ENCODE measurements at regions of chr1 and their contacts with region 1.

Region 1: DNA sequence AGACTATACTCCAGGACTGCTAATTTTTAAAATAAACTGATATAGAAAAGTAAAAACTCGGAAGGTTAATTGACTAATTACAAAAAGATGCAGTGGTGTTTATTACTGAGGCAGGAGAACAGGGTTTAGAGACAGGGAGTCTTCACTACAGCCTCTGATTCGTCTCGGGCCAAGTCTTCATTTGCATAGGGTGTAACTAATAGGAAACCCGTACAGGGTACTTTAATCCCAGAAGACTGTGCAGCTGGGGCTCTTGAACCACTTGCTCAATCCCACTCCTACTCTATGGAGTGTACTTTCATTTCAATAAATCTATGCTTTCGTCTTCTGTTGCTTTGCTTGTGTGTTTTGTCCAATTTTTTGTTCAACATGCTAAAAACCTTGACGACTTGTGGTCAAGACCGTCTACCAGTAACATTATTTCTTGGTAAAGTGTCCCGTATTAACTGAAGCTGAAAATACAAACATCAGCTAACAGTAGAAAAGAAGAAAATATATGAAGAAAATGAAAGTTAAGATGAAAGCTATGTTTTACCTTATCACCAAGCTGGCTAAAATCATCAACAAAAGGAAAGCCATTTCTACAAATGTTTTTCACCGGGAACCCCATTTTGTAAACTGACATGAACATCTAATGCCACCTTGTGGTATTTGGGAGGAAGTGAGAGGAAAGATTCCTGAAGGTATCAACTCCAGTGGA is 8.0 kb downstream of the SDHB start:
- DNase-seq: no peak
- H3K4me3 Mint-ChIP-seq: no peak overlapping the region
- H3K27ac Mint-ChIP-seq: peak overlapping the region; percentile 61
- H3K4me1 Mint-ChIP-seq: peaks cover 16% of the 10 kb centered on the region
- H3K27me3 Mint-ChIP-seq: no peaks in the 10 kb centered on the region

Region 2: DNA sequence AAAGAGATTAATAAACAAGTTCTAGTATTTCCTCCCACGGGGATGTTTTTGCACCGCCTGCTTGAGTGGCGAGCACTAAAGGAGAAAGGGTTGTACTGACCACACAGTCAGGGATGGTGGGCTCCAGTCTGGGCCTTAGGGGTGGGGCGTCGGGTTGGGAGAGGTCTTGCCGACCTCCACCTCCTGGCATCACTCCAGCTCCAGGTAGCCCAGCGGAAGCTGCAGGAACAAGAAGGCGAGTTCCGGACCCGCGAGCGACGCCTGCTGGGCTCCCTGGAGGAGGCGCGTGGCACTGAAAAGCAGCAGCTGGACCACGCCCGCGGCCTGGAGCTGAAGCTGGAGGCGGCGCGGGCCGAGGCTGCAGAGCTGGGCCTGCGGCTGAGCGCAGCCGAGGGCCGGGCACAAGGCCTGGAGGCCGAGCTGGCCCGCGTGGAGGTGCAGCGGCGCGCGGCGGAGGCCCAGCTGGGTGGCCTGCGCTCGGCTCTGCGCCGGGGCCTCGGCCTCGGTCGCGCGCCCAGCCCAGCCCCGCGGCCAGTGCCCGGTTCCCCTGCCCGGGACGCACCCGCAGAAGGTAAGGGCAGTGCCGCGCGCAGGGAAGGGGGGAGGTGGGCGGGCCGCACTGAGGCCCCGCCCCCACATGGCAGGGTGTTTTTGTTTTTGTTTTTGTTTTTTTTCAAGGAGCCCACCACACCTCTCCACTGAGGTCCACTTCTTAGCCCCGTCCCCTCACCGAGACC is 85.1 kb before region 1 on chr1:
- CTCF ChIA-PET with region 1: interaction called, 32 read pairs
- DNase-seq: peak; percentile 90
- H3K4me3 Mint-ChIP-seq: peak overlapping the region; percentile 60
- H3K27ac Mint-ChIP-seq: peak overlapping the region; percentile 64
- H3K4me1 Mint-ChIP-seq: peaks cover 14% of the 10 kb centered on the region
- H3K27me3 Mint-ChIP-seq: no peaks in the 10 kb centered on the region